ENCODE measurements at regions of chr6 and their contacts with region 1.

Region 1: DNA sequence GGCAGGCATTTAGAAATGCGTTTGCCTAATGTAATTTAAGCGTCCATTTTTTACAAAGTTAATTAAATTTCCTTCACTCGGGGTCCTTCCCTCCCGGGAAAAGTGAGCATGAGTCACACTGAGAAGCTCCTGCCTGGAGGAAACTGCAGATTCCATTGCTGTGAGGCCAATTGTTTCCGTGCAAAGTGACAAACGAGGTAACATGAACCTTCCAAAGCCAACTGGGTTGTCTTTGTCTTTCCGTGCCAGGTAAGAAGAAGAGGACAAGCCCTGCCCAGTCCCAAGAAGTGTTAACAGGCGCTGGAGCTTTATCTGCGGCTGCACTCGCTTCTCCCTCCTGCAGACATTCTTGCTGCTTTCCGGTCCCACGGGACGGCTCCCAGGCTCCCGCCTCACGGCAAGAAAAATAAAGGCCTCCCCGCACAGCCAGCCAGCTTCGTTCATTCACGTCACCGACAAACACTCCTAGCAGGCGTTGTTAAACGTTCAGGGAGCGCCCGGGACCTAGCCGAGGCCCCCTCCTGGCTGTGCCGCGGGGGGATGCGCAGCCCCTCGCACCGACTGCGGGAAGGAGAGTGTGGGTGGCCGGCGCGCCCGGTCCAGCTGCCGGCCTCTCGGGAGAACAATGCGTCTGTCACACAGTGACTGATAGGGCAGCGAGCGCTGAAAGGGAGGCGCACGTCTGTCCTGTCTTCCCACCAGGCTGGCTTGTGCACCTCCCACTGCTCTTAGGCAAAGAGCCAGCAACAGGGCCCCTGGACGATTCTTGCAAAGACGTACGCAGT is 61.5 kb upstream of the HDDC2 start:
- DNase-seq: peak; percentile 42
- ATAC-seq: peak; percentile 77
- H3K4me3 ChIP-seq: peak overlapping the region; percentile 22
- H3K27ac ChIP-seq: no peak overlapping the region
- H3K4me1 ChIP-seq: peaks cover 2% of the 10 kb centered on the region; the same call in 1 of the 2 replicates
- H3K27me3 ChIP-seq: peaks cover 30% of the 10 kb centered on the region
- CTCF ChIP-seq: no peak
- POLR2A ChIP-seq: no peak
- RAD21 ChIP-seq: no peak

Region 2: DNA sequence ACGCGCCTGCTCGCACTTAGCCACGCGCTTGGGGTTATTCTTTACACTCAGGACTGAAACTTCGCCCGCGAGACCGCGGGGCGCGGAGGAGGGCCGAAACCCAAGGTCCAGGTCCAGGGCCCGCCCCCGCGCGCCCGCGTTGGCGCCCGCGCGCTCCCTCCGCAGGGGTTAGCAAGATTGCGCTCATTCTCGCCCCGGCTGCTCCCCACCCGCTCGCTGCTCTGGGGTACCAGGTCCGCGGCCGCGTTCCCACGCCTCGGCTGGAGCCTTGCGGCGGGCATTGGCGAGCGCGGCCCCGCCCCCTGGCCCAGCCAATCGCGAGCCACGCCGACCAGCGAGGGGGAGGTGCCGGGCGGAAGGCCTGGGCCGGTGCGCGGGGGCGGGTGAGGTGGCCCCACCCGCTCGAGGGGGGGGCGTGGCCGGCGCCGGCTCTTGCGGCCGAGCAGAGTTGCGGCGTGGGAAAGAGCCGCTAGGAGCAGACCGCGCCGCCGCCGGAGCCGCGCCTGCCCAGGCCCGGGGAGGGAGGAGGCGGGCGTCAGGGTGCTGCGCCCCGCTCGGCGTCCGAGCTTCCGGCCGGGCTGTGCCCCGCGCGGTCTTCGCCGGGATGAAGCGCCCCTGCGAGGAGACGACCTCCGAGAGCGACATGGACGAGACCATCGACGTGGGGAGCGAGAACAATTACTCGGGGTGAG is 386.1 kb after region 1 on chr6 and contains the start of gene HEY2:
- CTCF ChIA-PET with region 1: no interaction called
- POLR2A ChIA-PET with region 1: no interaction called
- dilution Hi-C with region 1: no loop called
- in situ Hi-C with region 1: no loop called
- intact Hi-C with region 1: loop called (anchors 5 kb)
- DNase-seq: peak; percentile 81
- ATAC-seq: peak; percentile 99
- H3K4me3 ChIP-seq: peak within 1 kb of the TSS; percentile 60
- H3K27ac ChIP-seq: no peak within 1 kb of the TSS
- H3K4me1 ChIP-seq: peaks cover 10% of the 10 kb centered on the region
- H3K27me3 ChIP-seq: peaks cover 64% of the 10 kb centered on the region
- CTCF ChIP-seq: no peak
- POLR2A ChIP-seq: no peak
- RAD21 ChIP-seq: no peak
- total RNA-seq, gene HEY2: not detected in 2 replicates

Measured in IMR-90 (cell line).